ENCODE measurements at regions of chr17 and their contacts with region 1.

Region 1: DNA sequence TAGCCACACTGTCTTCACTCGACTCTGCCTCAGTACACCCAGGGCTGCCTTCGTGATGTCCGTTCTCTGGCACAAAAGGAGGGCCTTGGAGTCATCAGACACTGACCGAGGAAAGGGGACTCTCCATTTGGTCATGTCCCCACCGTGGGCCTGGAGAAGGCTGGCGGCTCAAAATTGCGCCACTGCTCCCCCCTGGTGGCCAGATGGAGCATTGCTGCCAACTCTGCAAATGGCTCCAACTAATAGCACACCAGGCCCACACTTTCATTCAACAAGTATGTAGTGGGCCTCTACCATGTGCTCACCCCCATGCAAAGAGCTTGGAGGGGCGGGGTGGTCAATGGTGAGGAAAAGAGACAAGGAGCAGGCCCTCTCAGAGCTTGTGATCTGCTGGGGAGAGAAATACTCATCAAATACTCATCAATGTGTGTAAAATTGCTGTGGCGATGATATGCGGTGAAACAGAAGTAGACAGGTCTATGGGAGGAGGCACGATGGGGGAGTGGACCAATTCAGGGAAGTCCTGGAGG is 5.2 kb upstream of the GRIN2C start:
- DNase-seq: peak; percentile 65 to 91 (median 72)
- ATAC-seq: peak; percentile 76
- H3K4me3 ChIP-seq: no peak overlapping the region
- H3K27ac ChIP-seq: no peak overlapping the region
- H3K4me1 ChIP-seq: peaks cover 15 to 24% of the 10 kb centered on the region in 2 donors
- H3K27me3 ChIP-seq: peaks cover 18 to 33% of the 10 kb centered on the region in 2 donors
- CTCF ChIP-seq: peak; percentile 93 to 96

Region 2: GRCh38 chr17:74744714-74745547 is 120.0 kb before region 1 on chr17:
- intact Hi-C with region 1: loop called in 1 of 2 experiments (anchors 2 kb)
- DNase-seq: peak in 3 of 4 donors; percentile 79 to 97 (median 87)
- ATAC-seq: peak; percentile 62
- H3K4me3 ChIP-seq: no peak overlapping the region
- H3K27ac ChIP-seq: peak overlapping the region in 1 of 2 donors; percentile 69
- H3K4me1 ChIP-seq: peaks cover 15 to 92% of the 10 kb centered on the region in 2 donors
- H3K27me3 ChIP-seq: peaks cover 0 to 11% of the 10 kb centered on the region in 2 donors
- CTCF ChIP-seq: peak; percentile 99 to 100

Region 3: DNA sequence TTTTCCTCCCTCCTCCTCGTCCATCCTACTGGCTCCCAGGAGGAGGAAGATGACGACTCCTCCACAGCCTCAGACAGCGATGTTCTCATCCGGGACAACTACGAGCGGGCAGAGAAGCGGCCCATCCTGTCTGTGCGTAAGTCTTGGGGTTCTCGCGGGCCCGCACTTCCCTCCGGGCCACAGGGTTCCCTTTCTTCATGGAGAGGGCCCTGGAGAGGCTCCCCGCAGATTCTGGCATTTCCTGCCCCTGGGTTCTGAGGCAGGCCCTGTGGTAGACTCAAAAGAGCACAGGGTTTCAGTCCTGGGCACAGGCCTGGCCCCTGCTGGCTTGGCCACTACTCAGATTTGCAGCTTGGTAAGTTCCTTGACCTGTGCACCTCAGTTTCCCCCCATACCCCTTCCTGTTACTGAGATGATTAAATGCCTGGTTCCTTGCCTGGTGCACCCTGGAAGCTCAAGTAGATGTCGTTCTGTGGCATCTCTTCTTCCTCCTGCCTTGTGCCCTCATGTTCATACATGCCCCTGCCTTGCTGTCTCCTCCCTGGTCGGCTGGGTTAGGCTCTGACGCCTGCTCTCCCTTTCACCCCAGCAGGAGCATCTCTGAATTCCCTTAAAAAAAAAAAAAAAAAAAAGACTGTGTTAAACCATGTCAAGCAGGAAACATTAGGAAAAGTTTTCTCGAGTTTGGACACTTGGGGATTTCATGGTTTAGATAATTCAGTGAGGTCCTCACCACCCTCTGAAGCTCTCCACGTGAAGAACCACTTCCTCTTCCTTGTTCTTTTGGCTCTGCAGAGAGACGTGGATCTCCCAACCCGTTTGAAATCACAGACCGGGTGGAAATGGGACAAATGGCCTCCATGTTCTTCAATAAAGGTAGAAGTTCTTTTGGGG is 74.5 kb before region 1 on chr17:
- intact Hi-C with region 1: loop called in 1 of 2 experiments (anchors 5 kb)
- DNase-seq: no peak
- ATAC-seq: peak; percentile 35
- H3K4me3 ChIP-seq: no peak overlapping the region
- H3K27ac ChIP-seq: no peak overlapping the region
- H3K4me1 ChIP-seq: peaks cover 0 to 31% of the 10 kb centered on the region in 2 donors
- H3K27me3 ChIP-seq: no peaks in the 10 kb centered on the region
- CTCF ChIP-seq: no peak